Mammary epithelial cell (primary cell): ENCODE measurements at regions of chr3 and their contacts with region 1.

Region 1: DNA sequence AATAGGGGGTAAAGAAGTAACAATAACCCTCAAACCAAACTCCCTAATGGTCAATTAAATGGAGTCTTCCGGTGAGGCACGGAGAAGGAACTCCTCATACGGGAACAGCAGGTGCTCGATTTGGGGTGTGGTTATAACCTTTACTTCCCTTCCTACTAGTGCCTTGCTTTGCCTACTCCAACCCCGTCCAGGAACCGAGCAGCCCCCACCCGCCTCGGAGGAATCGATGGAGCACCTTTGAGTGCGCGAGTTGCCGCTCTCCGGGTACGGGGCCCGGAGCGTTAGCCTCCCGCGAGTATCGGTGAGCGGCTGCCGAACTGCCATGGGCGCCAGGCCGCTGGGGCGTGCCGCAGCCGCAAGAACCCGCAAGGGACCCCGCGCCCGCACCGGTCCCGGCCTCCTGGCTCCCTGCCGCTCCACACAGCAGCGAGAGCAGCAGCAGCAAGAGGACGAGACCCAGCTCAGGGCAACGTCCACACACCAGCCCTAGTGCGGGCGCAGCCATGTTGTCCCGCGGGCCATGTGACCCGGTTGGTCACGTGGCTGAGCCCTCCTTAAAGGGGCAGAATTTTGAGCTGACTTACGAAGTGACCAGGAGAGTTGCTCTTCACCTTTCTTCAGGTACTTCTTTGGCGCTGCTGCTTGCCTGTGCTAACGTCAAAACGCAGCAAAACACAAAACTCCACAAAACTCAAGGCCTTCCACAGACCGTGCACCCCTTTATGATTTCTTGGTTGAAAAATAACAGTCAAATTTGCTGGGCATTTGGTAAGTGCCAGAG is at the start of gene SUMF1:
- DNase-seq: peak; percentile 75
- H3K4me3 ChIP-seq: peak within 1 kb of the TSS; percentile 59 to 79 (median 62)
- H3K27ac ChIP-seq: peak within 1 kb of the TSS; percentile 80
- H3K4me1 ChIP-seq: peaks cover 3% of the 10 kb centered on the region
- H3K27me3 ChIP-seq: no peaks in the 10 kb centered on the region
- CTCF ChIP-seq: no peak
- total RNA-seq, gene SUMF1: 31.4 to 87.7 TPM

Region 2: DNA sequence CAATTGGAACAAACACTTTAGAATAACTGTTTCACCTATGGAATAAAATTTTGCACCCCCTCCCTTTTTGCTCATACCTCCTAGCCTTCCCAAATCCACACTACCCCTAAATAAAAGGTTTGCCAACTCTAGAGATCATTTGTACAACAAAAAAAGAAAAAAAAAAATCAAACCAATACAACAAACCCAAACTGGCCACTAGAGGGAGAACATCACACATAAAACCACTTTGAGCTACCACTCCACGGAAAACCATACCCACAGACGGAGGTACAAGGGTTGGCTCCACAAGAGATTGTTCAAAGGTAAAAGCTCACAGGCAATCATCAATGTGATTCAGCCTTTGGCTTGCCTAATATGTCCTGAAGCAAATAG is 116.2 kb before region 1 on chr3:
- CTCF ChIA-PET with region 1: no interaction called
- dilution Hi-C with region 1: no loop called
- in situ Hi-C with region 1: no loop called
- intact Hi-C with region 1: loop called (anchors 10 kb)
- DNase-seq: peak; percentile 41
- H3K4me3 ChIP-seq: no peak overlapping the region
- H3K27ac ChIP-seq: no peak overlapping the region
- H3K4me1 ChIP-seq: no peaks in the 10 kb centered on the region
- H3K27me3 ChIP-seq: no peaks in the 10 kb centered on the region
- CTCF ChIP-seq: peak; percentile 71 to 75

Region 3: GRCh38 chr3:4416961-4417360 is 50.0 kb before region 1 on chr3:
- CTCF ChIA-PET with region 1: no interaction called
- dilution Hi-C with region 1: no loop called
- in situ Hi-C with region 1: no loop called
- intact Hi-C with region 1: loop called (anchors 2 kb)
- DNase-seq: peak; percentile 100
- H3K4me3 ChIP-seq: no peak overlapping the region
- H3K27ac ChIP-seq: peak overlapping the region; percentile 92
- H3K4me1 ChIP-seq: peaks cover 51% of the 10 kb centered on the region
- H3K27me3 ChIP-seq: no peaks in the 10 kb centered on the region
- CTCF ChIP-seq: peak in 1 of 2 donors; percentile 23